ENCODE measurements at regions of chr4 and their contacts with region 1.

Region 1: GRCh38 chr4:154551872-154552686 is 1.9 kb upstream of the PLRG1 start:
- DNase-seq: peak; percentile 42 to 87
- ATAC-seq: peak; percentile 34 to 52 (median 52)
- H3K4me3 ChIP-seq: no peak overlapping the region
- H3K4me3 Mint-ChIP-seq: no peak overlapping the region
- H3K27ac ChIP-seq: no peak overlapping the region
- H3K27ac Mint-ChIP-seq: no peak overlapping the region
- H3K4me1 ChIP-seq: no peaks in the 10 kb centered on the region
- H3K4me1 Mint-ChIP-seq: peaks cover 25 to 26% of the 10 kb centered on the region in 2 donors
- H3K27me3 ChIP-seq: no peaks in the 10 kb centered on the region
- H3K27me3 Mint-ChIP-seq: no peaks in the 10 kb centered on the region
- CTCF ChIP-seq: peak; percentile 83

Region 2: DNA sequence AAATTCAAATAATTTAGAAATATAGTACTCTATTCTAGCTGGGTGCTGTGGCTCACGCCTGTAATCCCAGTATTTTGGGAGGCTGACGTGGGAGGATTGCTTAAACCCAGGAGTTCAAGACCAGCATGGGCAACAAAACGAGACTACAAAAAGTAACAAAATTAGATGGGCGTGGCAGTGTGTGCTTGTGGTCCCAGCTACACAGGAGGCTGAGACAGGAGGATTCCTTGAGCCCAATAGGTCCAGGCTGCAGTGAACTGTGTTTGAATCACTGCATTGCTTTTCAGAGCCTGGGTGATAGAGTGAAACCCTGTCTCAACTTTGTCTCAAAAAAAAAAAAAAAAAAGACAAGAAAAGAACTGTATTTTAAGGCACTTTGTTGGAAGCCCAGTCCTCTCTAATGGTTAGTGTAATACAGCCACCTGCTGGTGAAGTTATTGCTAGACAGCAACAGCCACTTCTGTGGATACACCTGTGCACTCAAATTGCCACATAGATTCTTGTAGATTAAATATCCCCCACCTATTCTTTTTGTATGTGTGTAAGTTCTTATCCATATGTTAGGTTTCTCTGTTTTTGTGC is 70.4 kb after region 1 on chr4:
- intact Hi-C with region 1: loop called (anchors 1 kb)
- DNase-seq: peak in 1 of 2 donors; percentile 58
- ATAC-seq: peak in 2 of 3 donors; percentile 31 to 52
- H3K4me3 ChIP-seq: no peak overlapping the region
- H3K4me3 Mint-ChIP-seq: no peak overlapping the region
- H3K27ac ChIP-seq: no peak overlapping the region
- H3K27ac Mint-ChIP-seq: no peak overlapping the region
- H3K4me1 ChIP-seq: peaks cover 5% of the 10 kb centered on the region
- H3K4me1 Mint-ChIP-seq: no peaks in the 10 kb centered on the region
- H3K27me3 ChIP-seq: peaks cover 2% of the 10 kb centered on the region
- H3K27me3 Mint-ChIP-seq: peaks cover 10 to 13% of the 10 kb centered on the region in 2 donors
- CTCF ChIP-seq: peak; percentile 17

Region 3: GRCh38 chr4:155371432-155372043 is 819.5 kb after region 1 on chr4:
- intact Hi-C with region 1: loop called (anchors 1 kb)
- DNase-seq: peak in 1 of 2 donors; percentile 53
- ATAC-seq: peak in 1 of 3 donors; percentile 22
- H3K4me3 ChIP-seq: no peak overlapping the region
- H3K4me3 Mint-ChIP-seq: no peak overlapping the region
- H3K27ac ChIP-seq: no peak overlapping the region
- H3K27ac Mint-ChIP-seq: peak overlapping the region in 1 of 2 donors; percentile 29
- H3K4me1 ChIP-seq: no peaks in the 10 kb centered on the region
- H3K4me1 Mint-ChIP-seq: peaks cover 8 to 9% of the 10 kb centered on the region in 2 donors
- H3K27me3 ChIP-seq: no peaks in the 10 kb centered on the region
- H3K27me3 Mint-ChIP-seq: no peaks in the 10 kb centered on the region
- CTCF ChIP-seq: peak; percentile 68

Region 4: GRCh38 chr4:155376387-155377268 is 824.5 kb after region 1 on chr4 and contains the start of gene MAP9:
- intact Hi-C with region 1: loop called (anchors 1 kb)
- DNase-seq: peak; percentile 84 to 97
- ATAC-seq: peak; percentile 90 to 95 (median 90)
- H3K4me3 ChIP-seq: peak within 1 kb of the TSS; percentile 75
- H3K4me3 Mint-ChIP-seq: peak within 1 kb of the TSS; percentile 92
- H3K27ac ChIP-seq: peak within 1 kb of the TSS; percentile 87
- H3K27ac Mint-ChIP-seq: peak within 1 kb of the TSS; percentile 89 to 92
- H3K4me1 ChIP-seq: peaks cover 3% of the 10 kb centered on the region
- H3K4me1 Mint-ChIP-seq: peaks cover 9 to 10% of the 10 kb centered on the region in 2 donors
- H3K27me3 ChIP-seq: no peaks in the 10 kb centered on the region
- H3K27me3 Mint-ChIP-seq: no peaks in the 10 kb centered on the region
- CTCF ChIP-seq: no peak
- total RNA-seq, gene MAP9: 9.4 to 17.6 (median 10.6) TPM

Region 5: GRCh38 chr4:155787113-155787710 is 1235.1 kb after region 1 on chr4:
- intact Hi-C with region 1: loop called (anchors 1 kb)
- DNase-seq: peak in 1 of 2 donors; percentile 48
- ATAC-seq: peak; percentile 75 to 97 (median 95)
- H3K4me3 ChIP-seq: no peak overlapping the region
- H3K4me3 Mint-ChIP-seq: no peak overlapping the region
- H3K27ac ChIP-seq: no peak overlapping the region
- H3K27ac Mint-ChIP-seq: no peak overlapping the region
- H3K4me1 ChIP-seq: no peaks in the 10 kb centered on the region
- H3K4me1 Mint-ChIP-seq: peaks cover 5% of the 10 kb centered on the region in 2 donors
- H3K27me3 ChIP-seq: no peaks in the 10 kb centered on the region
- H3K27me3 Mint-ChIP-seq: no peaks in the 10 kb centered on the region
- CTCF ChIP-seq: peak; percentile 81

Region 6: DNA sequence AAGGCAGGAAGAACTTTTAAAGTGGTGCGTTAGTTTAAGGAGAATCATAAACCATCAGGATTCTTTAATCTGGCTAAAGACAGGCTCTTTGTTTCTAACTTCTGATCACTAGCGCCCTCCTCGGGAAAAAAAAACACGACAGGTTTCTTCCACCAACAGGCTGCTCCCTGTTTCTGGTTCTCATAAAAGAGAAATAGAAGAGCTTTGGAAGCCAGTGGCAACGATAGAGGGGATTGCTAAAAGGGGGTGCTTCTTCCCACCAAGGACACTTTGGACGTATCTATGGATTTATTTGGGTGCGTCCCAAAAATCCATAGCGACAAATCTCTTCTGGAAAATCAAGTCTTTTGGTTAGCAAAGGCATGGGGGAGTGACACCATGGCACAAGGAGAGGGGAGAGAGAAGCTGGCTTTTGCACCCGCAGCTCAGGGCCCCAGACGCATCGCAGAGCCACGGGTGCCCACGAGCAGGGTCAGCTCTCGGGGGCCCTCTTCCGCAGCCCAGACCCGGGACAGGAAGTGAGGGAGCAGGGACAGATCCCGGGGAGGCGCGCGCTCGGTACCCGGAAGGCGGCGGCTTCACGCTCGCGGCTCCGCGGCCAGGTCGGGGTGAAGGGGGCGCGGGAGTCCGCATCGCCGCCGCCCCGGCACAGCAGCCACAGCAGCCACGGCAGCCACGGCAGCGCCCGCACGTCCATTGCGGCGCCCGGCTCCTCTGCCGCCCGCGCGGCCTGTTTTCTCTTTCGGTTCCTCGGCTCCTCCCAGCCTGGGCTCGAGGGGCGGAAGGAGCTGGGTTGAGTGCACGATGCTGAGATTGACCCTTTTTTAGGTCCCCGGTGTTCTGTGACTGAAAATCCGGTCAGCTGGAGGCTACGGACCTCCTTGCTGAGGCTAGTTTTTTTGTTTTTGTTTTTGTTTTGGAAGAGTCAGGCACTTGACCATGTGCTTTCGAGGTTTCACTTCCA is 1401.4 kb after region 1 on chr4 and contains the start of gene CTSO:
- intact Hi-C with region 1: loop called (anchors 2 kb)
- DNase-seq: peak; percentile 72 to 83
- ATAC-seq: peak; percentile 90 to 91 (median 90)
- H3K4me3 ChIP-seq: peak within 1 kb of the TSS; percentile 95
- H3K4me3 Mint-ChIP-seq: peak within 1 kb of the TSS; percentile 100
- H3K27ac ChIP-seq: peak within 1 kb of the TSS; percentile 95
- H3K27ac Mint-ChIP-seq: peak within 1 kb of the TSS; percentile 99 to 100
- H3K4me1 ChIP-seq: peaks cover 6% of the 10 kb centered on the region
- H3K4me1 Mint-ChIP-seq: peaks cover 5 to 26% of the 10 kb centered on the region in 2 donors
- H3K27me3 ChIP-seq: no peaks in the 10 kb centered on the region
- H3K27me3 Mint-ChIP-seq: peaks cover 3 to 4% of the 10 kb centered on the region in 2 donors
- CTCF ChIP-seq: peak; percentile 62
- total RNA-seq, gene CTSO: 20.3 to 25.2 (median 22.2) TPM